Activated T-helper 1 cell treated with anti-CD3 and anti-CD28 coated beads, Interleukin-12 subunit alpha, Interleukin-12 subunit beta, Interleukin-2, Interleukin-4 antibody, amounts not matched to agents 30 ng/mL and 10 ng/mL and 1 ng/mL, durations not matched to agents 14 hours and 24 hours and 36 hours (primary cell): ENCODE measurements at regions of chr1 and their contacts with region 1.

Region 1: GRCh38 chr1:51296383-51297357 is 33.7 kb downstream of the TTC39A start:
- DNase-seq: peak; percentile 69
- H3K4me3 Mint-ChIP-seq: peak overlapping the region; percentile 69
- H3K27ac Mint-ChIP-seq: peak overlapping the region; percentile 76
- H3K4me1 Mint-ChIP-seq: peaks cover 17% of the 10 kb centered on the region
- H3K27me3 Mint-ChIP-seq: peaks cover 2% of the 10 kb centered on the region

Region 2: DNA sequence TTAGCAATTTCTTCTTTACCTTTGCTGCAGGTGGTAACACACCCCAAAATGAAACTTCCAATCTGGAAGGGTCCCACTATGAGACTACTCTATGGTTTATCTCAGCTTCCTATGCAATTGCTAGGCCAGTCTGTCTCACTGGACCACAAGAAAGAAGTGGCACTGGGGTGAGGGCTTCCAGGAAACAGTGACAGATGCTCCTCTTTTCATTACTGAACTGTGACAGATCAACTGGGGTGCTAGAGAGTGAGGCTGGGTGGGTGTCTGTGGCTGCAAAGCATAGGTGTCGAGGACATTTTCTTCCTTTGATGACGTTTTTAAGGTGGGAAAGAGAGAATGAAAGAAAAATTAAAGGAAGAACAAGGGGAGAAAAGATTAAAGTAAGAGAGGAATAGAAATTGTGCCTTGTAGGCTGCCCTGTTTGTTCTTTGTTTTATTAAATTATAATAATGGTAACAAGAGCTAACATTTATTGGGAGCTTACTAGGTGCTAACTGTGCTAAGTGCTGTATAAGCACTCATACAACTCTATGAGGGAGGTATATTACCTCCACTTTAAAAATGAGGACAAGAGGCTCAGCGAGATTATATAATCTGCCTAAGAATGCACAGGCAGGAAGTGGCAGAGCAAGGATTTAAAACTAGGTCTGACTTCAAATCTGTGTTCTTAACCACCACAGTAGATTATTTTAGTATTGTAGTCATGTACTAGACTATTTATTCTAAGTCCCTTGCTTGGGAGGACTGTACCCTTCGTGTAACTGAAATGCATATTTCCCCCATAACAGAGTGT is 845.6 kb before region 1 on chr1:
- intact Hi-C with region 1: no loop called
- DNase-seq: no peak
- H3K4me3 Mint-ChIP-seq: no peak overlapping the region
- H3K27ac Mint-ChIP-seq: no peak overlapping the region
- H3K4me1 Mint-ChIP-seq: peaks cover 5% of the 10 kb centered on the region
- H3K27me3 Mint-ChIP-seq: no peaks in the 10 kb centered on the region

Region 3: GRCh38 chr1:50968158-50968820 is 328.4 kb before region 1 on chr1:
- intact Hi-C with region 1: loop called (anchors 10 kb)
- DNase-seq: peak; percentile 82
- H3K4me3 Mint-ChIP-seq: peak overlapping the region; percentile 99
- H3K27ac Mint-ChIP-seq: peak overlapping the region; percentile 98
- H3K4me1 Mint-ChIP-seq: peaks cover 39% of the 10 kb centered on the region
- H3K27me3 Mint-ChIP-seq: peaks cover 10% of the 10 kb centered on the region

Region 4: GRCh38 chr1:51192213-51192843 is 104.3 kb before region 1 on chr1:
- intact Hi-C with region 1: loop called (anchors 1 kb)
- DNase-seq: peak; percentile 19
- H3K4me3 Mint-ChIP-seq: no peak overlapping the region
- H3K27ac Mint-ChIP-seq: no peak overlapping the region
- H3K4me1 Mint-ChIP-seq: no peaks in the 10 kb centered on the region
- H3K27me3 Mint-ChIP-seq: peaks cover 17% of the 10 kb centered on the region

Region 5: DNA sequence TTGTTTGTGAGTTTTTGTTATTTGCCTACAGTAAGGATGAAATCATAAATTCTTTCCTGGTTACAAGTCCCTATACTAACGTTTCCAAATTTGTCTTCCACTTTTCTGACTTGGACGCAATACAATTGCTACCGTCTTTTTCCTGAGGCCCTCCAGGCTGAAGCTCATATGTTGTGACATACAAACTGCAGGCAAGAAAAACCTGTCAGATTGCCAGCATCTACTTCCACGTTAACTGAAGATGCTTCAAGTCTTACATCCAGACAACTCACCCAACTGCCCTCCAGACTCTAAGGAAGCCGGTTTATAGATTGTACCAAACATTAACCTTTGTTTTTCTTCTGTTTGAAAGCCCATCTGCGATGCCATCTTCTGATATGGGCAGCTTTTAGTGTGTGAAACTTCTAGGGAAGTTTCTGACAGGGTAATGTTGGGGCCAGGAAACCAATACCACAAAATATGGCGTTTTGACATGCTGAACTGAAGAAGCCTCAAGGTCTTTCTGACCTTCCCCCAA is 82.0 kb before region 1 on chr1:
- intact Hi-C with region 1: loop called (anchors 5 kb)
- DNase-seq: peak; percentile 2
- H3K4me3 Mint-ChIP-seq: peak overlapping the region; percentile 16
- H3K27ac Mint-ChIP-seq: peak overlapping the region; percentile 32
- H3K4me1 Mint-ChIP-seq: peaks cover 17% of the 10 kb centered on the region
- H3K27me3 Mint-ChIP-seq: no peaks in the 10 kb centered on the region

Region 6: GRCh38 chr1:51445351-51446090 is 148.9 kb after region 1 on chr1:
- intact Hi-C with region 1: no loop called
- DNase-seq: no peak
- H3K4me3 Mint-ChIP-seq: no peak overlapping the region
- H3K27ac Mint-ChIP-seq: no peak overlapping the region
- H3K4me1 Mint-ChIP-seq: peaks cover 30% of the 10 kb centered on the region
- H3K27me3 Mint-ChIP-seq: no peaks in the 10 kb centered on the region